H1 (cell line): ENCODE measurements at regions of chr3 and their contacts with region 1.

Region 1: DNA sequence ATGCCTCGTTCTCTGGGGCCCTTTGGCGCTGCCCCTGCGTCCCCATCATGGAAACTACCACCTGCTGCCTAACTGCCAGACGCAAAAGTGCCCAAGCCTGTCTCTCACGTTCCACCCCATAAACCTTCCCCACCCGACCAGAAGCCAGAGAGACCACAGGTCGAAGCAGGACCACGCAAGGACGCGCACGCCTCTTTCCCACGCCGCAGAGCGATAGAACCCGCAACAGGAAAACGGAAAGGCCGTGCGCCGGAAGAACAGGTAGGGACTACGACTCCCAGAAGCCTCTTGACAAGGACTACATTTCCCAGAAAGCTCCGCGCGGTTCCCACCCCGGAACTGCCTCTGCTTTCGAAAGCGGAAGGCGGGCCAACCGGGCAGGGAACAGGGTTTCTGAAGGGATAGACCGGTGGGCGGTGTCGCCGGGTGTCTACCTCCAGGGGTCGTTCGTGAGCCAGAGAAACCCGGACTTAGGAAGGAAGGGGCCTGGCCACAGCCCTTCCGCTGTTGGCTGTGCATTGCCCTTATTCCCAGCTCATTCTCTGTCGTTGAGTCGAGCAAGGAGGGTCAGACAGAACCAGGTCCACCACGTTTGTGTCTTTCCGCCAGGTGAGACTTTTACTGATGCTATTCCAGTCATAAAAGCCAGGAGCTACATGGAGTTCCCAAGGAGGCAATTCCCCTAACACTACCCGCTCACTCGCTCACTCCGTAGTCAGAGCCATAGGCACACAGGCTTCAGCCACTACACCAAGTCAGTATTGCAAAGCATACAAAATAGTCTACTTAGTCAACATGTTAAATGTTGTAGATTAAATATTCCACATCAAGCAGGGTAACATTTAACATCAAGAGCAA is 56.6 kb upstream of the ZBTB38 start:
- DNase-seq: peak; percentile 94 to 98
- H3K4me3 ChIP-seq: peak overlapping the region; percentile 69 to 99 (median 85)
- H3K27ac ChIP-seq: no peak overlapping the region
- H3K4me1 ChIP-seq: peaks cover 0 to 4% (median 2%) of the 10 kb centered on the region in 4 experiments; a peak in 4 of 7 replicates
- H3K27me3 ChIP-seq: peaks cover 0 to 7% (median 3%) of the 10 kb centered on the region in 4 experiments; a peak in 1 of 7 replicates
- CTCF ChIP-seq: peak; percentile 74 to 91 (median 84)
- EP300 ChIP-seq: no peak
- POLR2A ChIP-seq: peak; percentile 34 to 73
- RAD21 ChIP-seq: peak; percentile 89

Region 2: DNA sequence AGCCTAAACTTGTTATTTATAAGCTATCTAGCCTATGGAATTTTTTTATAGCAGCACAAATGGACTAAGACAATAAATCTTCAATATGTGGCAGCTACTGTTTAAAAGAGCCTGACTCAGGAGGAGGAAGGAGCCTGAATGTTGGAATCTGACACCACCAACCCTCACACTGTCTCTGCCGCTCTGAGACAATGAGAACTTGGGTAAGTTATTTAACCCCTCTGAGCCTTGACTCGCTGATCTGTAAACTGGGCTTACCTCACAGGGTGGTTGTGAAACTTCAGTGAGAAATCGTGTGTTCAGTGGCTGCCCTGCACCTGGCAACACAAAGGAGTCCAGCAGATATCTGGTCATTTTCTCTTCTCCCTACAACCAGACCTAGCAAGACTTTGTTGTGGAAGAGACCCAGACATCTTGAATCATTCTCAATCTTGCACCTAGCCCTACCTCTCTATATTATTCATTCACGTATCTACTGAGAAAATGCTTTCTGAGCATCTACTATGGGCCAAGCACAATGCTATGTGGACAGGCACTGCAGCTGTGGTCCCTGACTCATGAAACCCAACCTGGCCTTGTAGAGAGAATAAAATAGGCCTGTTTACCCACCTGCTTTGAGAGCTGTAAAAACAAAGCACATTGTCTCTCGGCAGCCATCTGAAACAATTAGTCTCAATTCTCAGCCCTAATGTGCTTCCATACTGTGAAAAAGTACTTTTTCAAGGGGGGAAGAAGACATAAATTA is 452.0 kb before region 1 on chr3:
- CTCF ChIA-PET with region 1: no interaction called
- POLR2A ChIA-PET with region 1: no interaction called
- DNase-seq: no peak
- H3K4me3 ChIP-seq: no peak overlapping the region
- H3K27ac ChIP-seq: no peak overlapping the region
- H3K4me1 ChIP-seq: peaks cover 0 to 5% (median 5%) of the 10 kb centered on the region in 4 experiments; a peak in 5 of 7 replicates
- H3K27me3 ChIP-seq: no peaks in the 10 kb centered on the region
- CTCF ChIP-seq: no peak
- EP300 ChIP-seq: no peak
- POLR2A ChIP-seq: no peak
- RAD21 ChIP-seq: no peak

Region 3: DNA sequence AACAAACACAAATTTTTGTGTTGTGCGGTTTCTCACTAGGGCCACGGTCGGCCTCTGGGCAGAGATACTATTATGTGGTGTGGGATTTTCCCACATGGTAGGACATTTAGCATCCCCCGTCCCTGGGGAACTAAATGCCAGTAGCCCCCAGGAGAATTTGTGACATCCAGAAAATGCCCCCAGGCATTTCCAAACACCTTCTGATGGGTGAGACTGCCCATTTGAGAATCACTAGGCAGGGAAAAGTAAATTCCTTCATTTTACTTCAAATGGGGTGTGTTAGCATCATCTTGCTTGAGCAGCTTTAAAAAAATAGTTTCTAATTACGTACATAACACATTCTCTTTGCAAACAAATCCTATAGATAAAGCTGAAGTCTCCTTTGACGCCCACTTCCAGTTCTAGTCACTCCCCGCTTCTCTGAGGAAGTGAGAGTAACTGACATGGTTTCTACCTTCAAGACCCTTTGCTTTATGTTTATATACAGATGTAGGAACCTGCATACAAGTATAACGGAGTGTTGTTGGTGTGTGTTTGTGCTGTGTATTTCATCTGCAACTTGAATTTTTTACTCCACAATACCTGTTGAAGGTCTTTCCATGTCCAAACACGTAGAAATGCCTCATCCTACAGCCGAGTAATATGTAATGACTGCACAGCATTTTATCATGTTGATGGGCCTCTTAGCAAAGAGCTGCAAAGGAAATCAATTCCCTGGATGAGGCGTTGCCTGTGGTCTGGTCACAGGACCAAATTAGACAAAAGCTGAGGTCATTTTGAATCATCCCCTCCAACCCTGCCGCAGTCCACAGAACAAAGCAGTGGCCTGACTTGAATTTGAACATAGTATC is 25.2 kb after region 1 on chr3:
- CTCF ChIA-PET with region 1: interaction called, 12 read pairs
- POLR2A ChIA-PET with region 1: no interaction called
- DNase-seq: no peak
- H3K4me3 ChIP-seq: no peak overlapping the region
- H3K27ac ChIP-seq: no peak overlapping the region
- H3K4me1 ChIP-seq: peaks cover 0 to 5% (median 3%) of the 10 kb centered on the region in 4 experiments; a peak in 3 of 7 replicates
- H3K27me3 ChIP-seq: no peaks in the 10 kb centered on the region
- CTCF ChIP-seq: no peak
- EP300 ChIP-seq: no peak
- POLR2A ChIP-seq: no peak
- RAD21 ChIP-seq: no peak

Region 4: GRCh38 chr3:141426404-141427034 is 114.8 kb after region 1 on chr3:
- CTCF ChIA-PET with region 1: interaction called, 18 read pairs
- POLR2A ChIA-PET with region 1: no interaction called
- DNase-seq: no peak
- H3K4me3 ChIP-seq: no peak overlapping the region
- H3K27ac ChIP-seq: no peak overlapping the region
- H3K4me1 ChIP-seq: peaks cover 0 to 8% (median 3%) of the 10 kb centered on the region in 4 experiments; a peak in 4 of 7 replicates
- H3K27me3 ChIP-seq: no peaks in the 10 kb centered on the region
- CTCF ChIP-seq: no peak
- EP300 ChIP-seq: no peak
- POLR2A ChIP-seq: no peak
- RAD21 ChIP-seq: no peak